ENCODE measurements at regions of chr17 and their contacts with region 1.

Region 1: GRCh38 chr17:80147035-80147836 is at the start of gene EIF4A3:
- DNase-seq: peak; percentile 93 to 99 (median 98)

Region 2: DNA sequence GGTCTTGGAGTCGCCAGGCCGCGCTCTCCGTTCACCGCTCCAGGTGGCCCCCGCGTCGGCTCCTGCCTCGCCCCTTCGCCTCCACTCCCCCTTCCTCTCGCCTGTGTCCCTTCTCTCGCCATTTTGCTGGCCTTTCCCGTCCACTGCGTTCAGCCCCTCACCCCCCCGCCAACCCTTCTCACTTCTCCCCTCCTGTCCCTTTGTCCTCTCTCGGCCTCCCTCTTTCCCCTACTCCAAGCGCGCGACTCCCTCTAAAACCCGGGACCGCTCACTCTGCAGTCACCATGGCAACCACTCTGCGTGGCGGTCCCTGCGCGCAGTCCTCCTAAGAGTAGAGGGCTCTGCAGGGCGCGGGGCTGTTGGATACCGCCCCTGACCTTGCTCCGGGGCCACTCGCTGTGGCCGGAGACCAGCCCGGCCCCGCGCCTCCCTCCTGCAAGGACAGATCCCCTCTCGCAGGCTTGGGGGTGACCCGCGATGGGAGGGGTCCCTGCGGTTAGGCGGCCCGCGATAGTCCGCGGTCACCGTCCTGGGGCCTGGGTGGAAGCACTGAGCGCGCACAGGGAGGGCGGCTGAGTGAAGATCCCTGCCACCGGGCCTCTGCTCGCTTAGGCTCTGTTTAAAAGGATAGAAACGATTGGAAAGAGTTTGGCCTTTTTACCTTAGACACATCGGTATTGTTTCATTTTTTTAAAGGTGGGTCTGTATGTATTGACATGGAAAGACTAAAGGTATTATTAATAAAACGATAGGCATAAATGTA is 110.3 kb before region 1 on chr17:
- intact Hi-C with region 1: no loop called
- DNase-seq: peak; percentile 28 to 81 (median 59)

Region 3: DNA sequence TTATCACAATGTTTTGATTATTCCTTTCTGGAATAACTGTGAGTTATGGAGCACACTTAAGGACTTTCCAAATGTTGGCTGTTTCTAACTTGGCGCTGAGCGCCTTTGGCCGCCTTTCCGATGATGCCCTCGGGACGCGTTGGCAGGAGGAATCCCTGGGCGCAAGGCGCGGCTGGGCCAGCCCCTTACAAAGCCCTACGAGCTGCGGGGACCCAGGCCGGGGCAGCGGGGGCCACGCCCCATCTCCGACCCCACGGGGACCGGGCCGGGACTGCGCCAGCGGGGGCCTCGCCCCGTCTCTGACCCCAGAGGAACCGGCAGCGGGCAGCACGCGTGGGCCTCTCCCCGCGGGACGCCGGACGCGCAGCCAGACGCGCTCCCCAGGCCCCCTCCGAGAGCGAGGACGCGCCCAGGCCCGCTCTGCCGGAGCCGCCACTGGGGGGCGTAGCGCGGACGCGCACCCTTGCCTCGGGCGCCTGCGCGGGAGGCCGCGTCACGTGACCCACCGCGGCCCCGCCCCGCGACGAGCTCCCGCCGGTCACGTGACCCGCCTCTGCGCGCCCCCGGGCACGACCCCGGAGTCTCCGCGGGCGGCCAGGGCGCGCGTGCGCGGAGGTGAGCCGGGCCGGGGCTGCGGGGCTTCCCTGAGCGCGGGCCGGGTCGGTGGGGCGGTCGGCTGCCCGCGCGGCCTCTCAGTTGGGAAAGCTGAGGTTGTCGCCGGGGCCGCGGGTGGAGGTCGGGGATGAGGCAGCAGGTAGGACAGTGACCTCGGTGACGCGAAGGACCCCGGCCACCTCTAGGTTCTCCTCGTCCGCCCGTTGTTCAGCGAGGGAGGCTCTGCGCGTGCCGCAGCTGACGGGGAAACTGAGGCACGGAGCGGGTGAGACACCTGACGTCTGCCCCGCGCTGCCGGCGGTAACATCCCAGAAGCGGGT is 46.0 kb before region 1 on chr17 and contains the start of gene GAA:
- intact Hi-C with region 1: loop called (anchors 2 kb)
- DNase-seq: peak; percentile 44 to 94 (median 86)

Region 4: DNA sequence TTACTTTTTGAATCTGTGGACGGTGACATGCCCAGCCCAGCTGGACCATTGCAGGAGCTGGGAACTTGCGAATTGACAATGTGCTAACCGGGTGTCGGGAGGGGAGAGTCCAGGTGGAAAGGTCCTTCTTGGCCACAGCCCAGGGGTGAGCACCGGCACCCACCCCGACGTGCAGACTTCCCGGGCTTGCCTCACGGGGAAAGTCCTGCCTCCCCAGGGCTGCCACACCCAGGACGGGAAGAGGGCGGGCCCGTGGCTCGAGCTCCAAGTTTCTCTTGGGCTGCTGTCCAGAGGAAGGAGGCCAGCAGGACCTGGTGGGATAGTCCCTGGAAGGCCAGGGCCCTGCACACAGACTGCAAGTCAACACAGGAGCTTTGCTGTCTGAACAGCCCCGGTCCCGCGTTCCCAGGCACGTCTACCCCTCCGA is 40.3 kb after region 1 on chr17:
- intact Hi-C with region 1: no loop called
- DNase-seq: no peak

Region 5: GRCh38 chr17:80219763-80220725 is 72.8 kb after region 1 on chr17 and contains the starts of genes SGSH and SLC26A11:
- intact Hi-C with region 1: loop called (anchors 2 kb)
- DNase-seq: peak; percentile 35 to 89 (median 77)

Region 6: GRCh38 chr17:80263253-80264204 is 116.3 kb after region 1 on chr17:
- intact Hi-C with region 1: loop called (anchors 10 kb)
- DNase-seq: peak in 30 of 42 donors; percentile 15 to 78 (median 49)

Measured in head of caudate nucleus (tissue), 42 donors.